Activated CD4-positive, alpha-beta T cell treated with anti-CD3 and anti-CD28 coated beads for 36 hours (primary cell): ENCODE measurements at regions of chr10 and their contacts with region 1.

Region 1: DNA sequence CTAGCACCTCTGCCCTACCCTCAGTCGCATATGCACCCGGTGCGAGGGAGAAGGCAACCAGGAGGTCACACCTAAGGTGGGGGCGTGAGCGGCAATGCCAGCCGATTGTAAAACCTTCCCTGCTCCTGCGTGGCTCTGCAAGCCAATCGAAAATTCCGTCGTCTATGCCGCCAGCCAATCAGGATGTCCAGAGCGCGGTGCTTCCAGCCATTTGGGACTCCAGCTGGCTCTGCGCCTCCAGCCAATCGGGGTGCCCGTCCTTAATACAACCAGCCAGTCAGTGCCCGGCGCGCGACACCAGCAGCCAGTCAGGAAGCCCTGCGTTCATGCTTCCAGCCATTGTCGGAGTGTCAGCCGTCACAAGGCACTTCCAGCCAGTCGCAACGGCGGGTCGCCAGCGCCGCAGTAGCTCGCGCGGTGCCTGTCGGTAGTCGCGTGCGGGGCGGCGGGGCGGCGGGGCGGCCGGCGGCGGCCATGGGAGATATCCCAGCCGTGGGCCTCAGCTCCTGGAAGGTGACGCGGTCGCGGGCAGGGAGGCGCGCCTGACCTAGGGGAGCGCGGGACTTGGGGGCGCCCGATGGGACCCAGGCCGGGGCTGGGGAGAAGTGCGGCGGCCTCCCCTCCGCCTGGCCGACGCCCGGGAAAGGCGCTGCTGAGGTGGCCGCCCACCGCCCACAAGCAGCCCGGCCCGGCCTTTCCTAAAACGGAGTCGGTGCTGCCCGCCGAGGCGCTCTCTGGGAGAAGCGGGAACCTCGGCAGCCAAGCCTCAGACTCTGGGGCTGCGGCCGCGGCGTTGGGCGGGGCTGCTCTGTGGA is at the start of gene AKR1E2:
- DNase-seq: peak; percentile 93
- ATAC-seq: peak; percentile 94
- H3K4me3 Mint-ChIP-seq: peak within 1 kb of the TSS; percentile 77
- H3K27ac Mint-ChIP-seq: peak within 1 kb of the TSS; percentile 83
- H3K4me1 Mint-ChIP-seq: peaks cover 27% of the 10 kb centered on the region
- H3K27me3 Mint-ChIP-seq: peaks cover 9% of the 10 kb centered on the region
- total RNA-seq, gene AKR1E2: 9.8 to 13.4 TPM

Region 2: DNA sequence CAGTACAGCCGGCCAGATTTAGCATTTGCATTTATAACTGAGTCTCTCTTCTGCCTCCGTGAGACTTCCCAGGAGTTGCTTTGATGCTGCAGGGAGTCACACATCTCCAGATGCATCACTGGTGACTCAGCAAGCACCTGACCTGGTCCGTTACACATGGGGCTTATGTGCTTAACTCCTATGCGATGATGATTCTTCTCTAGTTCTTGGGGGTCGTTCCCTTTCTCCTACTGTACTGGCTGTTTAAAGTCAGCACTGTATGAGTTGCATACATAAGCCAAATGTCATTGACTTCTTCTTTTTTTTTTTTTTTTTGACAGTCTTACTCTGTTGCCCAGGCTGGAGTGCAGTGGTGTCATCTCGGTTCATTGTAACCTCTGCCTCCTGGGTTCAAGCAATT is 13.0 kb before region 1 on chr10:
- CTCF ChIA-PET with region 1: interaction called, 46 read pairs
- POLR2A ChIA-PET with region 1: no interaction called
- intact Hi-C with region 1: no loop called
- DNase-seq: peak; percentile 13
- ATAC-seq: no peak
- H3K4me3 Mint-ChIP-seq: no peak overlapping the region
- H3K27ac Mint-ChIP-seq: no peak overlapping the region
- H3K4me1 Mint-ChIP-seq: no peaks in the 10 kb centered on the region
- H3K27me3 Mint-ChIP-seq: peaks cover 6% of the 10 kb centered on the region

Region 3: GRCh38 chr10:5412277-5412941 is 586.4 kb after region 1 on chr10 and contains the start of gene NET1:
- CTCF ChIA-PET with region 1: no interaction called
- POLR2A ChIA-PET with region 1: no interaction called
- intact Hi-C with region 1: loop called in 1 of 2 experiments (anchors 1 kb)
- DNase-seq: peak; percentile 88
- ATAC-seq: peak; percentile 93
- H3K4me3 Mint-ChIP-seq: no peak within 1 kb of the TSS
- H3K27ac Mint-ChIP-seq: peak within 1 kb of the TSS; percentile 61
- H3K4me1 Mint-ChIP-seq: peaks cover 3% of the 10 kb centered on the region
- H3K27me3 Mint-ChIP-seq: peaks cover 17% of the 10 kb centered on the region
- total RNA-seq, gene NET1: 27.8 to 34.8 TPM